Mammary epithelial cell (primary cell): ENCODE measurements at regions of chr11 and their contacts with region 1.

Region 1: DNA sequence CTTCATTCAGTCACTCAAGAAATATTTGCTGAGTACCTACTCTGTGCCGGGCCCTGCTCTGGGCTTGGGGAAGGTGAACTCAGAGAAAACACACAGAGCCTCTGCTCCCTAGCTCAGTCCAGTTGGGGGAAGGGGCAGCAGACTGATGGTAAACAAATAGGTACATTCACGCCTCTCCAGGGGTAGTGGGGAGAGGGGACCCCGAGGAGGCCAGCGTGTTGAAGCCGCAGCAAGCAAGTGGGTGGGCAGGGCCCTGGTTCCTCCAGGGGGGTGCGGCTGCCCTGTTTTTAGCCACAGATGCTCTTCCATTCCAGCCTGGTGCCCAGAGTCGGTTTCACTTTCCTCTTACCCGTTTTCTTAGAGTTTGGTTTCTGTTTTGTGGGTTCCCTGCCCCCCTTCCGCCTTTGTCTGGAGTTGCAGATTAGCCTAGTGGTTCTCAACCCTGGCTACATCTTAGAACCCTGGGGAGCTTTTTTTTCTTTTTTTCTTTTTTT is 8.7 kb downstream of the DRAP1 start:
- DNase-seq: no peak
- H3K4me3 ChIP-seq: no peak overlapping the region
- H3K27ac ChIP-seq: no peak overlapping the region
- H3K4me1 ChIP-seq: no peaks in the 10 kb centered on the region
- H3K27me3 ChIP-seq: no peaks in the 10 kb centered on the region
- CTCF ChIP-seq: no peak

Region 2: GRCh38 chr11:65968600-65969482 is 40.9 kb after region 1 on chr11:
- CTCF ChIA-PET with region 1: no interaction called
- dilution Hi-C with region 1: loop called (anchors 5 kb)
- in situ Hi-C with region 1: no loop called
- intact Hi-C with region 1: no loop called
- DNase-seq: no peak
- H3K4me3 ChIP-seq: no peak overlapping the region
- H3K27ac ChIP-seq: no peak overlapping the region
- H3K4me1 ChIP-seq: peaks cover 9% of the 10 kb centered on the region
- H3K27me3 ChIP-seq: no peaks in the 10 kb centered on the region
- CTCF ChIP-seq: no peak